PC-3 (cell line): ENCODE measurements at regions of chr20 and their contacts with region 1.

Region 1: DNA sequence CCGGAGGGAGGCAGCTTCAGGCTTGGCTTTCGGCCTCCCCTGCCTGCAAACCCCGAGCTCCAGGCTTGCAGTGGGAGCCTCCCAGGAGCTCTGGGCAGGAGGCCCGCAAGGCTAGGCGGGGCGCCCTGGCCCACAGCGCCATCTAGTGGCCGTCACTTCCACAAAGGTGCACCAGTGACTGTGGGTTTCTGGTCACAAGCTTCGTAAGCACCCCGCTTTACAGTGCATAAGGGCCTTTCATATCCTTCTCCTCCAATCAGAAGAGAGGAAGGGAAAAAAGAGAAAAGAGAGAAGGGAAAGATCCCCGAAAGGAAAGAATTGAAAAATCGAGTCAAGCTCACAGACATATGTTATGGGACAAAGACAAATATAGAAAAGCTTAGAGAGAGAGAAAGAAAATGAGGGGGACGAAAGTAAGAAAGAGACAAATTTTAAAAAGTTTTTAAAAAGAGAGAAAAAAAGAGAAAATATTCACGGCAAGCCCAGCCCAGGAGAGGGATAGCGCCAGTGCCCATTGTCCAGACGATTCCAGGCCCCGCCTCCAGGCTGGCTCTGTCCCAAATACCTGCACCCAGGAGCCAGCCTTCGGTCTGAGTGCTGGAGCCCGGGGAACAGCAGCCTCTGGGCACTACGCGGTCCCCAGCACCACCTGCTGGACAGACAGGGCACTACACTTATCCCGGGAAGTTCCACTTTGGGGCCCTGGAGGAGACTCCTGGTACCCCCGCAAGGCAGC is 207.1 kb downstream of the PREX1 start:
- DNase-seq: peak; percentile 96
- ATAC-seq: peak; percentile 77
- H3K4me3 ChIP-seq: peak overlapping the region; percentile 65
- H3K27ac ChIP-seq: peak overlapping the region; percentile 92
- H3K4me1 ChIP-seq: peaks cover 25% of the 10 kb centered on the region
- H3K27me3 ChIP-seq: no peaks in the 10 kb centered on the region
- CTCF ChIP-seq: peak; percentile 85

Region 2: DNA sequence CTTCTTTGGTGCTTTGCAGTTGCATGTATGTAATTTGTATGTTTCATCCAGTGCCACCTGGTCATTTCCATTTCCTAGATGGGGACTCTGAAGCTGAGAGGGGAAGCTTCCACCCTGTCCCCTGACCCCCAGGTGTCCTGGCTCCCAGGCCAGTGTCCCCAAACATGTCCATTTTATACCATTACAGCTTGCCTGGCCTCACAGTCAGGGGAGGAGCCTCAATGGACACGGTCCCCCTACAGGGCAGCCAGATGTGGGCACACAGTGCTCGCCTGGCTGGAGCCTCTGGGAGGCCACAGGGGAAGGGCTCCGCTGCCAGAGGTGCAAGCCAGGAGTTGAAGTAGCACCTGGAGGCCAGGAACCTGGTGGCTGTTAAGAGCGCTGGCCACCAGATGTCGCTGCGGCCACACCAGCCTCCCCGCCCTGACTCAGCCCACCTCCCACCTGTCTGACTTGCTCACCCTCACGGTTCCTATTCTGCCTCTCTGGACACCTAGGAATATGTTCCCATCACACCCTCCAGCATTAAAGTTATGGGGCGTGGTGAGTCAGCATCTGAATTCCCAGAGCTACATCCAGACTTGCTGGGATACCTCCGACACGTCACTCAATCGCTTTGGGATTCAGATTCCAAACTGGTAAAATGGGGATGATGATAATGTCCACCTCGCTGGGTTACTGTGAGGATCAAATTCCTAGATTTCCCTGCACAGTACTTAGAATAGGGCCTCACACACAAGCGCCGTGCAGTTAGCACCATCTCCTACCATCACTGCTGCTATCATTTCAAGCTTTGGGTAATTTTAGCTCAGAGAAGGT is 942.8 kb before region 1 on chr20:
- CTCF ChIA-PET with region 1: no interaction called
- POLR2A ChIA-PET with region 1: no interaction called
- intact Hi-C with region 1: loop called (anchors 1 kb)
- DNase-seq: peak; percentile 77
- ATAC-seq: peak; percentile 82
- H3K4me3 ChIP-seq: no peak overlapping the region
- H3K27ac ChIP-seq: no peak overlapping the region
- H3K4me1 ChIP-seq: no peaks in the 10 kb centered on the region
- H3K27me3 ChIP-seq: no peaks in the 10 kb centered on the region
- CTCF ChIP-seq: peak; percentile 96

Region 3: DNA sequence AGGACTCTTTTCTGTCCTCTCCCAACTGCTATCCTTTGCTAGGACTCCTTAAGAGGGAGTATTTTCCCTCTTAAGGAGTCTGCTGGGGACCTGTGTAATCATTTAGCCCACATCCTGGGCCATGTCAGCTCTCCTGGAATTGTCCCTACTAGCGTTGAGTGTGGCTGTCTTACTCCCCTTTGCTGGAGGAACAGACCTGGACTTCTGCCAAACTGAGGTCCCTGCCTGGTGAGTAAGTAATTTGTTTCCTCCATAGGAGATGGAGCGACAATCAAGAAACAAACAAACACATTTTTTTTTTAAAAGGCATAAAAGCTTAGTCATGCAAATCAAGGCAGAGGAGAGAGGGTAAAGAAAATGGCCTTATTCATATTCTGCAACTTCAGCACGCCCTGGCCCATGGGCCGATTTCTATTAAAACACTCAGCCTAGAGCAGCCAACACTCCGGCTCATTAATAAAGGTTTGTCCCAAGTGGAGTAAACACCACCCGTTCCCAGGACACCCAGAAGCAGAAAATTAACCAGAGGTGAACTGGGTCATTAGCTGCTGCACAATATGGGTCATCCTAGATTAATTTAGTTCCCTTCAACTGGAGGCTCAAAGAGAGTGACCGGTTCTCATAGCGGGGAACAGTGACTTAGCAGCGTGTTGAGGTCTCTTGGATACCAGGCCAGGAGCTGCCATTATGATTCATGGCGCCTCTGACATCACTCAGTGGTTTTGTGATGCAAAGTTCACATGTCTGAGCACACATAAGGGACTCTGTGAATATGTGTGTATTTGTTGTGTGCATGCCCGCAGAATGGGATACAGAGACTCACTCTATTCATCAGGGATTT is 670.4 kb before region 1 on chr20:
- CTCF ChIA-PET with region 1: no interaction called
- POLR2A ChIA-PET with region 1: no interaction called
- intact Hi-C with region 1: loop called (anchors 1 kb)
- DNase-seq: peak; percentile 97
- ATAC-seq: peak; percentile 75
- H3K4me3 ChIP-seq: no peak overlapping the region
- H3K27ac ChIP-seq: peak overlapping the region; percentile 93
- H3K4me1 ChIP-seq: peaks cover 43% of the 10 kb centered on the region
- H3K27me3 ChIP-seq: no peaks in the 10 kb centered on the region
- CTCF ChIP-seq: peak; percentile 45; the same call in 1 of the 2 replicates

Region 4: GRCh38 chr20:48180184-48180957 is 440.3 kb before region 1 on chr20:
- CTCF ChIA-PET with region 1: no interaction called
- POLR2A ChIA-PET with region 1: no interaction called
- intact Hi-C with region 1: loop called (anchors 5 kb)
- DNase-seq: peak; percentile 93
- ATAC-seq: peak; percentile 94
- H3K4me3 ChIP-seq: peak overlapping the region; percentile 45; the same call in 1 of the 2 replicates
- H3K27ac ChIP-seq: peak overlapping the region; percentile 97
- H3K4me1 ChIP-seq: peaks cover 22% of the 10 kb centered on the region
- H3K27me3 ChIP-seq: no peaks in the 10 kb centered on the region
- CTCF ChIP-seq: no peak

Region 5: GRCh38 chr20:48421163-48421946 is 199.3 kb before region 1 on chr20:
- CTCF ChIA-PET with region 1: interaction called, 10 read pairs
- POLR2A ChIA-PET with region 1: no interaction called
- intact Hi-C with region 1: loop called (anchors 1 kb)
- DNase-seq: peak; percentile 35
- ATAC-seq: peak; percentile 50; the same call in 1 of the 2 replicates
- H3K4me3 ChIP-seq: no peak overlapping the region
- H3K27ac ChIP-seq: no peak overlapping the region
- H3K4me1 ChIP-seq: no peaks in the 10 kb centered on the region
- H3K27me3 ChIP-seq: peaks cover 93% of the 10 kb centered on the region
- CTCF ChIP-seq: peak; percentile 45

Region 6: DNA sequence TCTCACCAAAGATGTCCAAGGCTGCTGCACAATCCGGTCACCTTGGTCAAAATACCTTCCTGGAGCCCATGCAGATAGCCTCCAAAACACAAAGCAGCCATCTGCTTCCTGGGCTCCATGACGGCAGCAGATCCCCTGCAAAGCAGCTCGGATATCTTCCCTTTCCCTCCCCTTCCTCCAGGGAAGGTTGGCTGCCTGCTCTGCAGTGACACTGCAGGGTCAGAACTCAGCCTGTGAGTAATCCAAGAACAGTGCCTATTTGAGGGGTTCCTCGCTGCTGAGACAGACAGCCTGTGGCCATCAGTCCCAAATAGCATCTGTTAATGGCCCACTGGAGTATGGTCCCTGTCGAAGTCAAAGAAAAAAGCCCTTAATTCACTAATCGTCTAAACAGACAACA is 63.7 kb before region 1 on chr20:
- CTCF ChIA-PET with region 1: no interaction called
- POLR2A ChIA-PET with region 1: no interaction called
- intact Hi-C with region 1: loop called (anchors 2 kb)
- DNase-seq: peak; percentile 16
- ATAC-seq: no peak
- H3K4me3 ChIP-seq: no peak overlapping the region
- H3K27ac ChIP-seq: no peak overlapping the region
- H3K4me1 ChIP-seq: no peaks in the 10 kb centered on the region
- H3K27me3 ChIP-seq: peaks cover 67% of the 10 kb centered on the region
- CTCF ChIP-seq: no peak